Activated CD4-positive, alpha-beta T cell treated with anti-CD3 and anti-CD28 coated beads, Interleukin-2, amount 10 ng/mL, durations not matched to agents 24 days and 14 days (primary cell): ENCODE measurements at regions of chr10 and their contacts with region 1.

Region 1: GRCh38 chr10:110225756-110226542 is 18.5 kb downstream of the MXI1 start:
- DNase-seq: peak; percentile 95
- H3K4me3 Mint-ChIP-seq: peak overlapping the region; percentile 99
- H3K27ac Mint-ChIP-seq: peak overlapping the region; percentile 99
- H3K4me1 Mint-ChIP-seq: peaks cover 45% of the 10 kb centered on the region
- H3K27me3 Mint-ChIP-seq: peaks cover 3% of the 10 kb centered on the region

Region 2: GRCh38 chr10:110137142-110137545 is 88.8 kb before region 1 on chr10:
- intact Hi-C with region 1: loop called (anchors 1 kb)
- DNase-seq: peak; percentile 77
- H3K4me3 Mint-ChIP-seq: no peak overlapping the region
- H3K27ac Mint-ChIP-seq: peak overlapping the region; percentile 64
- H3K4me1 Mint-ChIP-seq: peaks cover 25% of the 10 kb centered on the region
- H3K27me3 Mint-ChIP-seq: no peaks in the 10 kb centered on the region

Region 3: GRCh38 chr10:110279407-110279986 is 53.5 kb after region 1 on chr10:
- intact Hi-C with region 1: loop called (anchors 2 kb)
- DNase-seq: peak; percentile 81
- H3K4me3 Mint-ChIP-seq: no peak overlapping the region
- H3K27ac Mint-ChIP-seq: no peak overlapping the region
- H3K4me1 Mint-ChIP-seq: peaks cover 11% of the 10 kb centered on the region
- H3K27me3 Mint-ChIP-seq: peaks cover 13% of the 10 kb centered on the region

Region 4: DNA sequence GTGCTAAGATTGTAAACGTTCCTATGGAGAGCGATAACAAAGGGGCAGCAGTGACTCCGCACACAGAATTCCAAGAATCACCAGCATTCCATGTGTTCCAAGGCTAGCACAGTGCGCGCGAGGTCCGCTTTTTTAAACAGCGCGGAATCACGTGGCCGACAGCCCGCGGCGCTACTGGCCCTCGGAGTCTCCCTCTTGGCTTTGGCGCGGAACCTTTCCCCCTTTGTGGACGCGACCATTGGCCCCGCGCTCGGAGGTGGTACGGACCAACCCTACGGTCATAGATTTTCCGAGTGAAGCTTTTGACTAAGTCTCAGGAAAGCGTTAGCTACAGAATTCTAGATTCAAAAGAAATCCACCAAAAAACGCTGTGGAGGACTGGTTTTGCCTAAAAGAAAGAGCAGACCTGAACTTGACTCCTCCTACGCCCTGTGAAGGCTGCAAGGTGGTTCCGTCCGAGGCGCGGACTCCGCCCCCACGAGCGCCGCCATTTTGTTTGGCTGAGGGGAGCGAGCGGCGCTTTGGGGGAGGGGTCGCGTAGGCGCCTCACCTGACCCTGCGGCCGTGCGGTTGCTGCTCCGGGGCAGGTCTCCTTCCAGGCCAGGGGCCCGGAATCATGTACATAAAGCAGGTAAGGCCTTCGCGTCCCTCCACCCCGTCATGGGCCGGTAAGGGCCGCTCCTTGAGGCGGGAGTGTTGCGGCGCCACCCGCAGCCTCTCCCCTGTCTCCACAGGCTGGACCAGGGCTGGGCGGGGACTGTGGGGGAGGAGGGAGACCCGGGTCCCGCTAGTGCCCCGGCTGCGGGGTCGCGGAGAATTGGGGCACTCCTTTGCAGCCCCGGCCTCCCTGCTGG is 341.5 kb after region 1 on chr10 and contains the start of gene SMC3:
- intact Hi-C with region 1: loop called (anchors 5 kb)
- DNase-seq: peak; percentile 98
- H3K4me3 Mint-ChIP-seq: peak within 1 kb of the TSS; percentile 97
- H3K27ac Mint-ChIP-seq: peak within 1 kb of the TSS; percentile 98
- H3K4me1 Mint-ChIP-seq: peaks cover 32% of the 10 kb centered on the region
- H3K27me3 Mint-ChIP-seq: peaks cover 21% of the 10 kb centered on the region
- total RNA-seq, gene SMC3: 82.2 and 87.3 TPM in 2 replicates